ENCODE measurements at regions of chr1 and their contacts with region 1.

Region 1: GRCh38 chr1:99808391-99809115 is 41.6 kb upstream of the AGL start:
- DNase-seq: peak; percentile 68 to 91
- H3K4me3 ChIP-seq: no peak overlapping the region
- H3K4me1 ChIP-seq: peaks cover 2% of the 10 kb centered on the region; the same call in 1 of the 2 replicates
- H3K27me3 ChIP-seq: peaks cover 2% of the 10 kb centered on the region; the same call in 1 of the 2 replicates

Region 2: DNA sequence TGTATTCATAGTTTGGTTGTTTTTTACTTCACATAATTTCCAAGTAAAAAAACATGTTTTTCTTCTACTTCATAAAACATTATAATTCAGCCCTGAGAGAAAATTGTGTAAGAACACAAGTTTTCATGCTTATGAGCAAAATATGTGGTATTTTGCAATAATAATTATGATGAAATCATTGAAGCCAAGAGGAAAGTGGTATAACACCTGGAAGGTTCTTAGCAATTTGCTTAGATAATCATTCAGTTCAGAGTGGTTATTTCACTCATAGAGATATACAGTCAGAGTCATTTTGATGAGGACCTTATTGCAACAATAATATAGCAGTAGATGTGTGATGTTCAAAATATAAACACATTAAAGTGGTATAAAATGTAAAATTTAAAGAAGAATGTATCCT is 449.8 kb before region 1 on chr1:
- in situ Hi-C with region 1: no loop called
- DNase-seq: no peak
- H3K4me3 ChIP-seq: no peak overlapping the region
- H3K4me1 ChIP-seq: no peaks in the 10 kb centered on the region
- H3K27me3 ChIP-seq: no peaks in the 10 kb centered on the region

Region 3: GRCh38 chr1:100037927-100038659 is 229.5 kb after region 1 on chr1:
- in situ Hi-C with region 1: loop called (anchors 5 kb)
- DNase-seq: peak; percentile 70 to 88
- H3K4me3 ChIP-seq: peak overlapping the region; percentile 90
- H3K4me1 ChIP-seq: peaks cover 34% of the 10 kb centered on the region
- H3K27me3 ChIP-seq: no peaks in the 10 kb centered on the region

Region 4: GRCh38 chr1:100459358-100460114 is 651.0 kb after region 1 on chr1:
- in situ Hi-C with region 1: loop called (anchors 10 kb)
- DNase-seq: peak; percentile 78 to 79
- H3K4me3 ChIP-seq: no peak overlapping the region
- H3K4me1 ChIP-seq: peaks cover 29% of the 10 kb centered on the region
- H3K27me3 ChIP-seq: no peaks in the 10 kb centered on the region